K562 (cell line): ENCODE measurements at regions of chr14 and their contacts with region 1.

Region 1: GRCh38 chr14:105005929-105006830 is 14.7 kb downstream of the CDCA4 start:
- DNase-seq: no peak
- ATAC-seq: peak; percentile 55
- H3K4me3 ChIP-seq: no peak overlapping the region
- H3K27ac ChIP-seq: no peak overlapping the region
- H3K4me1 ChIP-seq: peaks cover 0 to 20% of the 10 kb centered on the region in 2 experiments; a peak in 2 of 5 replicates
- H3K27me3 ChIP-seq: no peaks in the 10 kb centered on the region
- CTCF ChIP-seq: no peak
- EP300 ChIP-seq: no peak
- POLR2A ChIP-seq: no peak; the same call in 1 of the 2 replicates
- RAD21 ChIP-seq: no peak

Region 2: GRCh38 chr14:104993808-104994591 is 12.2 kb before region 1 on chr14:
- CTCF ChIA-PET with region 1: no interaction called
- POLR2A ChIA-PET with region 1: interaction called, 16 read pairs
- in situ Hi-C with region 1: no loop called
- intact Hi-C with region 1: no loop called
- DNase-seq: no peak
- ATAC-seq: no peak
- H3K4me3 ChIP-seq: no peak overlapping the region
- H3K27ac ChIP-seq: no peak overlapping the region
- H3K4me1 ChIP-seq: peaks cover 0 to 8% of the 10 kb centered on the region in 2 experiments; a peak in 2 of 5 replicates
- H3K27me3 ChIP-seq: no peaks in the 10 kb centered on the region
- CTCF ChIP-seq: no peak
- EP300 ChIP-seq: no peak
- POLR2A ChIP-seq: no peak
- RAD21 ChIP-seq: no peak

Region 3: GRCh38 chr14:105020815-105021655 is 14.9 kb after region 1 on chr14 and contains the start of gene CDCA4:
- CTCF ChIA-PET with region 1: no interaction called
- POLR2A ChIA-PET with region 1: interaction called, 28 read pairs
- in situ Hi-C with region 1: no loop called
- intact Hi-C with region 1: no loop called
- DNase-seq: peak; percentile 95 to 97 (median 97)
- ATAC-seq: peak; percentile 87
- H3K4me3 ChIP-seq: peak within 1 kb of the TSS; percentile 83
- H3K27ac ChIP-seq: peak within 1 kb of the TSS; percentile 96
- H3K4me1 ChIP-seq: peaks cover 25 to 36% of the 10 kb centered on the region in 2 experiments
- H3K27me3 ChIP-seq: no peaks in the 10 kb centered on the region
- CTCF ChIP-seq: no peak
- EP300 ChIP-seq: peak; percentile 19; the same call in 1 of the 2 replicates
- POLR2A ChIP-seq: peak; percentile 72
- RAD21 ChIP-seq: no peak
- polyA plus RNA-seq, gene CDCA4: 6.6 to 10.3 TPM

Region 4: DNA sequence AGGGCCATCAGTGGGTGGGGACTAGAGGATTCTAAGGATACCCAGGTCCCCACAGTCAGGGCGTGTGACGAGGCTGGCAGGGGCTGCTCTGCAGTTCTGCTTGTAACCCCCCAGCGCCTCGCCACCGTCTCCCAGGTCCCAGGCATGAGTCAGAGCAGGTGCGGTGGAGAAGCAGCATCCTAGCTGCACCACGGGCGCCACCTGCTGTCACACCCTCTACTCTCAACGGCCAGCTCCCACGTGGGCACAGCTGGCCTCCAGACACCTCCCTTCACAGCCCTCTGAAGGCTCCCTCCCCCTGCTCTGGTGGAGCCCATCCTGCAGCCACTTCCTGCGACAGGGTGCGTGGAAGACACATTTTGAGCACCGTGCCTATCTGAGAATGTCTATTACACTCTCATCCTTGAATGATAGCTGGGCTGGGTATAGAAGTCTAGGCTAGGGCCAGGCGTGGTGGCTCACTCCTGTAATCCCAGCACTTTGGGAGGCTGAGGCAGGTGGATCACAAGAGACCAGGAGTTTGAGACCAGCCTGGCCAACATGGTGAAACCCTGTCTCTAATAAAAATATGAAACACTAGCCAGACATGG is 181.8 kb after region 1 on chr14:
- CTCF ChIA-PET with region 1: no interaction called
- POLR2A ChIA-PET with region 1: no interaction called
- in situ Hi-C with region 1: no loop called
- intact Hi-C with region 1: no loop called
- DNase-seq: no peak
- ATAC-seq: no peak
- H3K4me3 ChIP-seq: no peak overlapping the region
- H3K27ac ChIP-seq: no peak overlapping the region
- H3K4me1 ChIP-seq: peaks cover 0 to 28% of the 10 kb centered on the region in 2 experiments; a peak in 2 of 5 replicates
- H3K27me3 ChIP-seq: no peaks in the 10 kb centered on the region
- CTCF ChIP-seq: peak; percentile 9 to 17 (median 15); a peak in 2 of 6 replicates
- EP300 ChIP-seq: no peak
- POLR2A ChIP-seq: no peak
- RAD21 ChIP-seq: peak in 1 of 2 experiments; percentile 25; a peak in 2 of 4 replicates